A549 (cell line): ENCODE measurements at regions of chr17 and their contacts with region 1.

Region 1: DNA sequence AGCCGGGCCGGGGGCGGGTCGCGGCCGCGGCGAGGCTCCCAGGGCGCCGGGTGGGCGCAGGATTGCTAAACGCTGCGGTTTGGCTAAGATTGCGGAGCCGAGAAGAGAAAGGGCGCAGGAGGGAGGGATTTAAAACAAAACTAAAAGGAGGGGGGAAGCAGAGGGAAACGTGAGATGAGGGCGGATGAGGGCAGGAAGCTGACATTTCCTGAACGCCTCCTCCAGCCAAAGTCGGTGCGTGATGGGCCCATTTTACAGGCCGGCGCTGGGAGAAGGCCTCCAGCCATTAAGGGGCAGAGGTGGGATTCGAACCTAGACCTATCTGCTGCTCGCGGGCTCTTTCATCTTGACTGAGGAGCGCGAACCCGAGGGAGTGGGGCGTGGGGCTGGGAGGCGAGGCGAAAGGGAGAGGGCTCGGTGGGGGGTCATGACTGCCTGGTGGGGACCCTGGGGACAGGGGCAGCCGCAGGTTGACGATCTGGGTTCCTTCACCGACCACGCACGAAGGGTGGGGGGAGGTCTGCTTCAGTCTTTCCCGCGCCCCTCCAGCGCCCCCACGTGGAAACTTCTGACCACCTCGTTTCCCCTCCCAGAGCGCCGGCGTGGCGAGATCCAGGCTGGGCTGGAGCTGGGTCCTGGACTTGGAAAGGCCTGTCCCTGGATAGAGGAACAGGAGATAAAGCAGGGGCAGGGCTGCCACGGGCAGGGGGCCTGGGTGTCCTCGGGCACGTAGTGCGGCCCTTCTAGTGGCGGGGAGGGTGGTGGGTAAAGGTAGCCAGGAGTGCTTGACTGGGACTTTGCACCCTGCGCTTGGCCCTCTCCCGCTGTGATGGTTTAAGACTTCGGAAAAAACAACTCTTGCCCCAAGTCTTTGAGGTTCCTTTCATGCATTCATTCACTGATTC is 3.8 kb upstream of the TAC4 start:
- DNase-seq: peak; percentile 66 to 73
- ATAC-seq: peak; percentile 72 to 88
- H3K4me3 ChIP-seq: peak overlapping the region; percentile 72
- H3K27ac ChIP-seq: peak overlapping the region; percentile 79 to 91
- H3K4me1 ChIP-seq: peaks cover 3% of the 10 kb centered on the region; the same call in 1 of the 3 replicates
- CTCF ChIP-seq: peak; percentile 90
- EP300 ChIP-seq: no peak
- POLR2A ChIP-seq: no peak
- RAD21 ChIP-seq: peak; percentile 84 to 89

Region 2: DNA sequence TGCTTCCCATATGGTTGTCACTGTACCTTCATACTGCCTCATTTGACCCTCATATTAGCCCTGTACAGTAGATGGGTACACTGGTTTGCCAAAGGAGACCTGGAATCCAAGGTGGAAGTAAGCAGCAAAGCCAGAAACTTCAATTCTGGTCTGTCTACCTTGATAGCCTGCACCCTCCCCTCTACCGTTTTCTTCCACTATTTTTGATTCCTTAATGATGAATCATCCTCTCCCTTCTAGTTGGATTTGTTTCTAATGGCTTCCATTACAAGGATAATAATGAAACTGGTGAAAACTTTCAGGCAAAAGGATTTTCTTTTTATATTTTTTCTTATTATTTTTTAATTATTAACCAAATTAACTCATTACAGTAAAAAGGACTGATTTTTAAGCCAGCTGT is 21.0 kb before region 1 on chr17:
- CTCF ChIA-PET with region 1: interaction called, 17 read pairs
- POLR2A ChIA-PET with region 1: no interaction called
- DNase-seq: no peak
- ATAC-seq: peak in 1 of 2 experiments; percentile 9; a peak in 1 of 6 replicates
- H3K4me3 ChIP-seq: no peak overlapping the region
- H3K27ac ChIP-seq: peak overlapping the region in 1 of 2 experiments; percentile 40; a peak in 2 of 6 replicates
- H3K4me1 ChIP-seq: peaks cover 27% of the 10 kb centered on the region
- CTCF ChIP-seq: no peak
- EP300 ChIP-seq: no peak
- POLR2A ChIP-seq: no peak
- RAD21 ChIP-seq: no peak